ENCODE measurements at regions of chr17 and their contacts with region 1.

Region 1: GRCh38 chr17:16438557-16439302 is 23.4 kb downstream of the TRPV2 start:
- DNase-seq: peak; percentile 92
- H3K4me3 Mint-ChIP-seq: peak overlapping the region; percentile 99
- H3K27ac Mint-ChIP-seq: peak overlapping the region; percentile 98
- H3K4me1 Mint-ChIP-seq: peaks cover 61% of the 10 kb centered on the region
- H3K27me3 Mint-ChIP-seq: no peaks in the 10 kb centered on the region

Region 2: DNA sequence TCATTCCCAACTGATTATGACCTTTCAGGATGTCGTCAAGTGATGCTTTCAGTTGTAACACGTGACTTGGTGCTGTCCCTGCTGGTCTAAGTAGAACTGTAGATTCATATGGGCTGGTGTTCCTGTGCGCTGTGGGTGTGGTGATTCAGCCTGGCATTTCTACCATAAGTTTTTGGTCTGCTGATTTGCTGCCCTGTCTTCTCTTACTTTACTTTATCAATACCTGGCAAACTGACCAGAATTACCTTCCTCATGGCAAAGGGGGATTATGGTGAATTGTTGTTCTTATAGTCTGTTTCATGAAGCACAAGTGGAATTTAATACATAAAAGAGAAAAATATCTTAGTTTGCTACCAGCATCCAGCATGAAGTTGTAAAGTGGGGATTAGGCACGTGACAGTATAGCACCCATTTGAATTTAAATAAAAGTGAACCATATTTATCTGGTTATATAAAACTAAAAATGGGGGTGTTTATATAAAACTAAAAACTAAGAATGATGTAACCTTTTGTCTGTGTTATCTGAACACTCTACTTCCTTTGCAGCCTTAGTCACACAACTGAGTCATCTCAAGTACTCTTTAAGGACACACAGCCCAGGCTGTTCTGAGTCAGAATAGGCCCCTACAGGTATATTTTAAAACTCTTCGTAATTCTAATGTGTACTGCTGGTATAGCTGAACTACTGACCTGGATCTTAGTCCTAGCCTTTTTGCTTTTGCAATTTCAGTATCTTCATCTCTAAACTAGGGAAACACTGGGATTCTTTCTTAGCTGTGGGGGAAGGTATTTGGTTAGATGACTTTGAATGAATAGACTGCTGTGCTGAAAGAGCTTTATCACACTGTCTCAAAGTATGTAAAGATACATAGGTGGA is 410.8 kb before region 1 on chr17:
- intact Hi-C with region 1: loop called (anchors 2 kb)
- DNase-seq: peak; percentile 33
- H3K4me3 Mint-ChIP-seq: peak overlapping the region; percentile 68
- H3K27ac Mint-ChIP-seq: peak overlapping the region; percentile 91
- H3K4me1 Mint-ChIP-seq: peaks cover 33% of the 10 kb centered on the region
- H3K27me3 Mint-ChIP-seq: no peaks in the 10 kb centered on the region

Region 3: DNA sequence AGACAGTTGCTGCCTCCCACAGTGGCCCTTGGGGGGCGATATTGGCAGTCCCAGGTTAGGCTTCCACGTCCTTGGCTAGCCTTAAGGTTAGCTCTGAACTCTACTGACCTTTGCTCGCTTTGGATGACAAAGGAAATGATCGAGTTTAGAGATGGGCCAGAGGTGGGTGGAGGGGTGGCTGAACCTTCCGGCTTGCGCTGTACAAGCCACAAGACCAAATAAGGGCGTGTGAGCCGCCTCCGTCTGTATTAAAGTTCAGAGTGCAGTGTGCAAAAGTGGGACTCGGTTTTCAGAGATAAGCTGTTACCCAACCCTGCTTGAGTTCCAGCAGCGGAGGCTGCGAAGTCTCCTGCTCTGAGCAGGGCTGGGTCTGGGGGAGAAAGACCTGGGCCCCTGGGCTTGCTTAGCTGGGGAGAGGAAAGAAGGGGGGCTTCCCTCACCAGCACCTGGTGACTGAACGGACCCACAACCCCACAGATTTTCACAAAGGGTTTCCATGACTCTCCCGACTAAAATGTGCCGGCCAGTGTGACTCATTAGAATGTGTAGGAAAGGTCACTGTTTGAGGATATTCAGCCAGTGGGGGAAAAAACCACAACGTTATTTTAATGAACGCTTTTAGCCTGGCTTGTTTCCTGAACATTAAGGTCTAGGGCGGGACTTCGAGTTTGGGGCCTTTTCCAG is 152.6 kb before region 1 on chr17:
- intact Hi-C with region 1: loop called (anchors 1 kb)
- DNase-seq: peak; percentile 75
- H3K4me3 Mint-ChIP-seq: peak overlapping the region; percentile 73
- H3K27ac Mint-ChIP-seq: peak overlapping the region; percentile 99
- H3K4me1 Mint-ChIP-seq: peaks cover 48% of the 10 kb centered on the region
- H3K27me3 Mint-ChIP-seq: no peaks in the 10 kb centered on the region

Region 4: DNA sequence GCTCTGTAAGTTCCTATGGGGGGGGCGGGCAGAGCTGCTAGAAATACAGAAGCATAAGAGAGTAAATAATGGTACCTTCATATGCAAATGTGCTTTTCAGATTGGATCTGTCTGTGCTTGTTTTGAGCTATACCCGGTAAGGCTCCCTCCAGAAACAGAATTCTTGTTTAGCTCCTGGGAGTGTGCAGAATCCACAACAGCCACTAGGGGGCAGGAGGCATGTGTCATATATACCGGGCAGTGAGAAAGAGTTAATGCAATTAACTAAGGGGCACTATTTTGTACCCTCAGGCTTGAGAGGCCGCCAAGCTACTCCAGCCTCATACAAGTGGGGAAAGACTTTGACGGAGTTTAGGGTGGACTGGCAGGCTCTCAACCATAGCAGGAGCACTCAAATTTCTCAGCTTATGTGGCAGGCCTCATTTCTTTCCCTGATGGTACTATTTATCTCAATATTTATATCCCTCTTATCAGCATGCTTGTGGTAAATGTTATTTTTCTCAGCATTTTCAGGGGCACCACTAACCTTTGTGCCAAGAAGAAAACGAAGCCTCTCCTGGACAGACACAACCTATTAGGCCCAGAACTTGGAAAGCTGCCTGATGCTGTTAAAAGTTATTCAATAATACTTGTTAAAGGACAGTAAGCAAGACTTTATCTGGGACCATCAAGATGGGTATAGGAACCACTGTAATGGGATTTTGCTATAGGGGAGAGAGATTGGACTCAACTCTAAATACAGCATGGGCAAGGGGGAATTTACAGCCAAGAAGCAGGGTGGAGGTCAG is 74.8 kb before region 1 on chr17:
- intact Hi-C with region 1: loop called (anchors 1 kb)
- DNase-seq: peak; percentile 59
- H3K4me3 Mint-ChIP-seq: no peak overlapping the region
- H3K27ac Mint-ChIP-seq: no peak overlapping the region
- H3K4me1 Mint-ChIP-seq: no peaks in the 10 kb centered on the region
- H3K27me3 Mint-ChIP-seq: peaks cover 3% of the 10 kb centered on the region

Region 5: DNA sequence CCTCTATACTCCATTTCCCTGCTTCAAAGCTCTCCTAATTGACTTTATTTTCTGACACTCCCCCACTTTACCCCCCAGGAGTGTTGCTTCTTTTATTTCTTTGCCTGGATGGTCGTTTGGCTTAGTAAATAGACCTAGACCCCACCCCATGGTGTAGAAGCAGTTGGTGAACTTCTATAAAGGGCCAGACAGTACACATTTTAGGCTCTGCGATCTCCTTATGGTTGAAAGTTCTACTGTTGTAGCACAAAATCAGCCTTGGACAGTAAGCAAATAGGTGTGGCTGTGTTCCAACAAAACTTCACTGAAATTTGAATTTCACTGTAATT is 98.4 kb after region 1 on chr17:
- intact Hi-C with region 1: loop called (anchors 1 kb)
- DNase-seq: no peak
- H3K4me3 Mint-ChIP-seq: peak overlapping the region; percentile 91
- H3K27ac Mint-ChIP-seq: peak overlapping the region; percentile 52
- H3K4me1 Mint-ChIP-seq: peaks cover 16% of the 10 kb centered on the region
- H3K27me3 Mint-ChIP-seq: no peaks in the 10 kb centered on the region

Region 6: GRCh38 chr17:16617481-16618060 is 178.8 kb after region 1 on chr17:
- intact Hi-C with region 1: no loop called
- DNase-seq: no peak
- H3K4me3 Mint-ChIP-seq: no peak overlapping the region
- H3K27ac Mint-ChIP-seq: no peak overlapping the region
- H3K4me1 Mint-ChIP-seq: no peaks in the 10 kb centered on the region
- H3K27me3 Mint-ChIP-seq: no peaks in the 10 kb centered on the region

Region 7: GRCh38 chr17:16653209-16654041 is 214.7 kb after region 1 on chr17 and contains the start of gene ZNF624:
- intact Hi-C with region 1: loop called (anchors 1 kb)
- DNase-seq: peak; percentile 80
- H3K4me3 Mint-ChIP-seq: peak within 1 kb of the TSS; percentile 87
- H3K27ac Mint-ChIP-seq: peak within 1 kb of the TSS; percentile 44
- H3K4me1 Mint-ChIP-seq: peaks cover 13% of the 10 kb centered on the region
- H3K27me3 Mint-ChIP-seq: peaks cover 2% of the 10 kb centered on the region
- total RNA-seq, gene ZNF624: 2.0 and 2.8 TPM in 2 replicates